ENCODE measurements at regions of chr14 and their contacts with region 1.

Region 1: DNA sequence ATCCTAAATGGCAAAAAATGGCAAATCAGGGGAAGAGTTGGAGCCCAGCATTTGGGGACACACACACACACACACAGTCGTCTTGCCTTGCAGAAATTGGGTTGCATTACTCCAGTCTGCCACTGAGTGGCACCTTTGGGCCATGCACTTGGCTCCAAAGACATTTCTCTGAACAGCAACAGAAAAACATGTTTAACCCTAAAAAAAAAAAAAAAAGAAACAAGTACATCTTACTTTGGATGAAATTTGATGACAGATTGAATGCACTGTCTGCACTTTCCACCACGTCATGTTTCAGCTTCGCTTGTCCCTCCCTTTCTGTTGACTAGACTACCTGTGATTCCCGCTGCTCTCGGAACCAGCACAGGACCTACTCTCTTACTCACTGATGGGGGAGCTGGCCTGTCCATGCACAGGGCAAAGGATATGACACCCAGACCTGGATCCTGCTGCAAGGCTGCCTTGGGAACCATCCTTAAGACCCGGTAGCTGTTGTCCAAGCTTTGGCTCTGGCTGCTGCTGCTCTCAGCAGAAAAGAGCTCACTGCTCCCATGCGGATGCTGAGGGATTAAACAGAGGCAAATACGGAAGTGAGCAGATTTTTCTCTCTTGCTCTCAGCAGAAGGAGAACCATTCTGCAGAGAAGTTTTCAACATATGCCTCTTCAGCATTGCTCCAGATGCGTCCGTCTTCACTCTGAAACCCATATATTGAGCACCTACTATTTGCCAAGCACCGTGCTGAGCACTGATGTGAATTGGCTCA is 376.8 kb downstream of the DPF3 start:
- DNase-seq: peak; percentile 53
- ATAC-seq: peak; percentile 46
- H3K4me3 ChIP-seq: no peak overlapping the region
- H3K27ac ChIP-seq: peak overlapping the region; percentile 86; the same call in 1 of the 2 replicates
- H3K4me1 ChIP-seq: peaks cover 56% of the 10 kb centered on the region
- H3K27me3 ChIP-seq: no peaks in the 10 kb centered on the region
- CTCF ChIP-seq: peak; percentile 86 to 95 (median 93)
- EP300 ChIP-seq: no peak
- POLR2A ChIP-seq: no peak
- RAD21 ChIP-seq: peak; percentile 97

Region 2: DNA sequence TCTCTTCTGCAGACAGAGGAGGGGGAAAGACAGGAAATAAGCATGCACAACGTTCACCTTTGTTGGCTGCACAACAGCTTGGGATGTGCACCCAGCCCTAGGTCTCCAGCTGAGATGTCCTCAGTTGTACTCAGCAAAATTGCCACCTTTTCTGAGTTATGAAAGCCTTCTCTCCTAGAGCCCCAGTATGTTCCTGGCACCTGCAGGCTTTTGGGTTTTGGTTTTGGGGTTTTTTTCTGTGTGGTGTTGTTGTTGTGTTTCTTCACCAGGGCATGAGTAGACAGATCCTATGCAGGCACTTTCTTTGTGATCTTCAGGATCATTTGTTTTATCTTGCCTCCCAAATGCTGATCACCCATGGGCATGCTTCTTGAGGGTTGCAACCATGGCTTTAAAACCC is 86.7 kb before region 1 on chr14:
- CTCF ChIA-PET with region 1: no interaction called
- POLR2A ChIA-PET with region 1: no interaction called
- RAD21 ChIA-PET with region 1: no interaction called
- SMC1A ChIA-PET with region 1: no interaction called
- in situ Hi-C with region 1: no loop called
- intact Hi-C with region 1: no loop called
- DNase-seq: no peak
- ATAC-seq: no peak
- H3K4me3 ChIP-seq: no peak overlapping the region
- H3K27ac ChIP-seq: no peak overlapping the region
- H3K4me1 ChIP-seq: no peaks in the 10 kb centered on the region
- H3K27me3 ChIP-seq: no peaks in the 10 kb centered on the region
- CTCF ChIP-seq: no peak
- EP300 ChIP-seq: no peak
- POLR2A ChIP-seq: no peak
- RAD21 ChIP-seq: no peak

Region 3: DNA sequence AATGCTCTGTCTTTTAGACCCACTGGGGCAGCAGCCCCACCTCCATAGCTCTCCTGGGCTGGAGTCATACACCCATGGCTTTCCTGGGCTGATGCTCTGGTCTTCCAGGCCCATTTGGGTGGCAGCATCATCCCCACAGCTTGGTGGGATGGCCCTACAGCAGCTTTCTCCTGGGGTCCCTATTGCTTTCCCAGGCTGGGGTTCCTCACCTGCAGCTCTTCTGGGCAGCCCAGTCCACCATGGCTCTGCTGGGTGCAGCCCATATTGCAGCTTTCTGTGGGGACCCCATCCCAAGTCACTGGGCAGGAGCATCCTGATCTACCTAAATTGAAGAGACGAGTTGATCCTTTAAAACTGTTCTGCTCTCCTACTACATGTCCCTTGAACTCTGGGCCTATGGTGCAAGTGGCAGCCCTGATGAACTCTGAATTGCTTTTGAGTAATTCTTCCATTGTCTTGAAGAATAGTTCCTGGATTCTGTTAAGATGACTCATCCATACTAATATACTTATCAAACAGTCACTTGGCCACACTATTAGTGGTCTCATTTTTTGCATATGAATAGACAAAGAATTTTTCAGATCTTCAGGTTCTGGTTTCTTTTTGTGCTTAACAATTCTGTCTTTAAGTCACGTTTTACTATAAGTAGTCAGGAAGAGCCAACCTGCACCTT is 13.3 kb before region 1 on chr14:
- CTCF ChIA-PET with region 1: interaction called, 43 read pairs
- POLR2A ChIA-PET with region 1: interaction called, 5 read pairs
- RAD21 ChIA-PET with region 1: interaction called, 9 read pairs
- SMC1A ChIA-PET with region 1: interaction called, 17 read pairs
- in situ Hi-C with region 1: no loop called
- intact Hi-C with region 1: no loop called
- DNase-seq: no peak
- ATAC-seq: no peak
- H3K4me3 ChIP-seq: no peak overlapping the region
- H3K27ac ChIP-seq: no peak overlapping the region
- H3K4me1 ChIP-seq: peaks cover 5% of the 10 kb centered on the region; the same call in 1 of the 2 replicates
- H3K27me3 ChIP-seq: no peaks in the 10 kb centered on the region
- CTCF ChIP-seq: no peak
- EP300 ChIP-seq: no peak
- POLR2A ChIP-seq: no peak
- RAD21 ChIP-seq: no peak

Region 4: DNA sequence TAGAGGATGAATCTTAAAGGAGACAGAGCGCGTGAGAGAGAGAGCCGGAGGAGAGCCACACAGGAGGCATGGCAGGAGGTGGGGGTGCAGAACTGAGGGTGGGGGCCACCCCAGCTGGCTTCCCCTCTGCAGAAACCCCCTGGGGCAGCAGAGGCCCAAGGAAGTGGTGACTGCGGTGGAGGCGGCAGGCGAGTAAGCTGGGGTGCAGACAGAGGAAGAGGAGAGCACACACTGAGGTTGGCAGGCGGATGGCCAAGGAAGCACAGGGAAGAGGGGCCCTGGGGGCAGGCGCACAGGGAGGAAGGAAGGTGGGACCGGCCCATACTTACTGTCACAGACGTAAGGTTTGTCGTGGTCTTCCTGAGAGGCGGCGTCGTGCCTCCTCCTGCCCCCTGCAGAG is 197.0 kb after region 1 on chr14:
- CTCF ChIA-PET with region 1: interaction called, 13 read pairs
- POLR2A ChIA-PET with region 1: no interaction called
- RAD21 ChIA-PET with region 1: interaction called, 12 read pairs
- SMC1A ChIA-PET with region 1: interaction called, 14 read pairs
- in situ Hi-C with region 1: no loop called
- intact Hi-C with region 1: no loop called
- DNase-seq: peak; percentile 31
- ATAC-seq: peak; percentile 78
- H3K4me3 ChIP-seq: no peak overlapping the region
- H3K27ac ChIP-seq: no peak overlapping the region
- H3K4me1 ChIP-seq: peaks cover 24% of the 10 kb centered on the region
- H3K27me3 ChIP-seq: no peaks in the 10 kb centered on the region
- CTCF ChIP-seq: no peak
- EP300 ChIP-seq: peak; percentile 60 to 68; a peak in 3 of 4 replicates
- POLR2A ChIP-seq: no peak
- RAD21 ChIP-seq: no peak

Region 5: GRCh38 chr14:72863216-72864006 is 346.3 kb after region 1 on chr14:
- CTCF ChIA-PET with region 1: interaction called, 12 read pairs
- POLR2A ChIA-PET with region 1: no interaction called
- RAD21 ChIA-PET with region 1: interaction called, 4 read pairs
- SMC1A ChIA-PET with region 1: interaction called, 5 read pairs
- in situ Hi-C with region 1: no loop called
- intact Hi-C with region 1: no loop called
- DNase-seq: peak; percentile 68
- ATAC-seq: peak; percentile 94
- H3K4me3 ChIP-seq: no peak overlapping the region
- H3K27ac ChIP-seq: no peak overlapping the region
- H3K4me1 ChIP-seq: peaks cover 8% of the 10 kb centered on the region
- H3K27me3 ChIP-seq: no peaks in the 10 kb centered on the region
- CTCF ChIP-seq: peak; percentile 6 to 19 (median 10); a peak in 2 of 6 replicates
- EP300 ChIP-seq: no peak
- POLR2A ChIP-seq: no peak
- RAD21 ChIP-seq: peak; percentile 26; the same call in 1 of the 2 replicates

Region 6: DNA sequence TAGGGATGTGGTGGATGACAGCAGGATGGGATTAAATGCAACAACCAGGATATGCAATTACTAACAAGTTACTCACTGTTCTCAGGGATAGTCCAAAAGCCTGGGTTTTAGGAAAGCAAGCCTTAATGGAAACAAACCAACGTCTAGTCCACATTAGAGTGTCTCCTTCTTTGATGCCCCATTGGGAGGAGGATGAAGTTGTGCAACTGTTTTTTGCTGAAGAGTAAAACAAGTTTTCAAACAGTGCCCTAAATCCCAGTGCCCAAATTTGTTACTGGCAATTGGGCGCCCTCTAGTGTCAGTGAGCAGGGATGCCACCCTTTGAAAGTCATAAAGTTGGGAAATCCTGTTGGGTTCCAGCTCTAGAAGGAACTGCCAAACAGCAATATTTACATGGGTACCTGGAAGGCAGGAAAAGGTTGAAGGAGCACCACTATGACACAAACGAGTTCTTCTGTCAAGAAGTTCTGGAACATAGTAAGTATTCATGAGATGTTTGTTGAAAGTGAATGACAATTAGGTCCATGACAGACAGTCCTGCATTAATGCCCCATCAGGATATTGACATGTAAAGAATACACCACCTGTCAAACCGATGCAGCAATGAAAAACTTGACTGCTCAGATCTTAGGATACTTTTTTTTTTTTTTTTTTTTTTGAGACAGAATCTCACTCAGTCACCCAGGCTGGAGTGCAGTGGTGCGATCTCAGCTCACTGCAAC is 387.9 kb after region 1 on chr14:
- CTCF ChIA-PET with region 1: interaction called, 520 read pairs
- POLR2A ChIA-PET with region 1: interaction called, 12 read pairs
- RAD21 ChIA-PET with region 1: interaction called, 216 read pairs
- SMC1A ChIA-PET with region 1: interaction called, 304 read pairs
- in situ Hi-C with region 1: loop called (anchors 5 kb)
- intact Hi-C with region 1: loop called (anchors 1 kb)
- DNase-seq: no peak
- ATAC-seq: peak; percentile 83
- H3K4me3 ChIP-seq: no peak overlapping the region
- H3K27ac ChIP-seq: no peak overlapping the region
- H3K4me1 ChIP-seq: peaks cover 7% of the 10 kb centered on the region; the same call in 1 of the 2 replicates
- H3K27me3 ChIP-seq: no peaks in the 10 kb centered on the region
- CTCF ChIP-seq: peak; percentile 88 to 96 (median 95)
- EP300 ChIP-seq: no peak
- POLR2A ChIP-seq: no peak
- RAD21 ChIP-seq: peak; percentile 99